ENCODE measurements at regions of chr12 and their contacts with region 1.

Region 1: GRCh38 chr12:53352331-53353256 is 16.4 kb upstream of the SP7 start:
- DNase-seq: peak; percentile 82 to 84 (median 84)
- H3K4me3 ChIP-seq: no peak overlapping the region
- H3K4me3 Mint-ChIP-seq: peak overlapping the region in 2 of 8 donors; percentile 1 to 7
- H3K27ac ChIP-seq: no peak overlapping the region
- H3K27ac Mint-ChIP-seq: peak overlapping the region in 4 of 7 donors; percentile 1 to 70 (median 26)
- H3K4me1 ChIP-seq: no peaks in the 10 kb centered on the region
- H3K4me1 Mint-ChIP-seq: peaks cover 4 to 7% (median 6%) of the 10 kb centered on the region in 4 donors
- H3K27me3 ChIP-seq: no peaks in the 10 kb centered on the region
- H3K27me3 Mint-ChIP-seq: no peaks in the 10 kb centered on the region

Region 2: GRCh38 chr12:52748578-52748977 is 604.0 kb before region 1 on chr12:
- CTCF ChIA-PET with region 1: no interaction called
- POLR2A ChIA-PET with region 1: no interaction called
- intact Hi-C with region 1: no loop called
- DNase-seq: no peak
- H3K4me3 ChIP-seq: no peak overlapping the region
- H3K4me3 Mint-ChIP-seq: no peak overlapping the region
- H3K27ac ChIP-seq: no peak overlapping the region
- H3K27ac Mint-ChIP-seq: no peak overlapping the region
- H3K4me1 ChIP-seq: no peaks in the 10 kb centered on the region
- H3K4me1 Mint-ChIP-seq: peaks cover 3 to 7% (median 5%) of the 10 kb centered on the region in 4 donors
- H3K27me3 ChIP-seq: no peaks in the 10 kb centered on the region
- H3K27me3 Mint-ChIP-seq: peaks cover 4 to 12% of the 10 kb centered on the region in 2 donors

Region 3: DNA sequence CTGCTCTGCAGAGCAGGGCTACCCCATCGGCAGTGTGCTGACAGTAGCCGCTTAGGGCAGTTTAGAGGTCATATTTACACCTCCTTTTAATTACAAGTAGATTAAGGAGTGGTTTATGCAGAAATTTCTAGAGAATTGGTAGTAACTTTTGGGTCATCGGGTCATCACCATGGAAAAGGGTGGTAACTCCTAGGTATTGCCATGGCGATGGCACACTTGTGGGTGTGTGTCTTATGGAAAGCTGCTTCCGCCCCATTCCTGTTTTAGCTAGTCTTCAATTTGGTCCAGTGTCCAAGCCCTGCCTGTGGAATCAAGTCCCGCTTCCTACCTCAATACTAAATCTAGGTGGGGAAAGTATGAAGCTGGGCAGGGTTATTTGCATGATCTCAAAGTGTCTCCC is 201.6 kb before region 1 on chr12:
- CTCF ChIA-PET with region 1: no interaction called
- POLR2A ChIA-PET with region 1: no interaction called
- intact Hi-C with region 1: no loop called
- DNase-seq: no peak
- H3K4me3 ChIP-seq: no peak overlapping the region
- H3K4me3 Mint-ChIP-seq: no peak overlapping the region
- H3K27ac ChIP-seq: no peak overlapping the region
- H3K27ac Mint-ChIP-seq: no peak overlapping the region
- H3K4me1 ChIP-seq: no peaks in the 10 kb centered on the region
- H3K4me1 Mint-ChIP-seq: no peaks in the 10 kb centered on the region
- H3K27me3 ChIP-seq: no peaks in the 10 kb centered on the region
- H3K27me3 Mint-ChIP-seq: no peaks in the 10 kb centered on the region

Region 4: DNA sequence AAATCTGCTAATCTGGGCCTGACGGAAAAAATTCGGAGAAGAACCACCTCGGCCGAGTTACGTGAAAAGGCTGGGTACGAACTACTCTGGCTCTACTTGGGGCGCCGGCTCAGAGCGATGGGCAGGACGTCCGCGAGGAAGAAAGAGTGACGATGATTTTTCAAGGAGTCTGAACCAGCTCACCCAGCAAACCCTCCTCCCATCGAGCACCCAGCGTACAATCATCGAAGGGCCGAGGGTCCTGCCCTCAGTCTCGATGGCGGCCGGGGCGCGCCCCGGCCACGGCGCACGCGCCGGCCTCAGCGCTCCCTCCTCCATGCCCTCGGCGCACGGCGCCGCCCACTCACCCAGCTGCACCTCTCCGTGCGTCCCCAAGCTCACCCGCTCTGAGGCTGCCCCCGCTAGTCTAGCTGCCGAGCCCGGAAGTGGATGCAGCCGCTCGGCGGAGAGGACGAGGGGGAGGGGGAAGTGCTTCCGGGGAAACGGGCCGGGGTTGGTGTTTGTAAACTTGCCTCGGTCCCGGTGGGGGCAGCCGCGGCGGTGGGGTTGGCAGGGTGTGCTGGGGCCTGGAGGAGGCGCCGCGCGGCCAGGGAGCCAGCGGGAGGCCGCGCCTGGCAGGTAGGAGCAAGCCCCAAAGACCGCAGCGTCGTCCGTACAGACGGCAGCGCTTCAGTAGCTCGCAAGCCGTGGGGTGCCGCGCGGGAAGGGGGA is 172.2 kb before region 1 on chr12 and contains the starts of genes CSAD and ZNF740:
- CTCF ChIA-PET with region 1: no interaction called
- POLR2A ChIA-PET with region 1: no interaction called
- intact Hi-C with region 1: no loop called
- DNase-seq: peak; percentile 96 to 99 (median 97)
- H3K4me3 ChIP-seq: peak within 1 kb of the TSS; percentile 56 to 74
- H3K4me3 Mint-ChIP-seq: peak within 1 kb of the TSS; percentile 90 to 96 (median 91)
- H3K27ac ChIP-seq: peak within 1 kb of the TSS; percentile 89
- H3K27ac Mint-ChIP-seq: peak within 1 kb of the TSS; percentile 88 to 98 (median 97)
- H3K4me1 ChIP-seq: peaks cover 50% of the 10 kb centered on the region
- H3K4me1 Mint-ChIP-seq: peaks cover 36 to 62% (median 49%) of the 10 kb centered on the region in 4 donors
- H3K27me3 ChIP-seq: no peaks in the 10 kb centered on the region
- H3K27me3 Mint-ChIP-seq: no peaks in the 10 kb centered on the region
- total RNA-seq, gene CSAD: 62.5 to 64.2 TPM
- total RNA-seq, gene ZNF740: 109 to 113 TPM

Region 5: GRCh38 chr12:53200458-53201176 is 152.0 kb before region 1 on chr12:
- CTCF ChIA-PET with region 1: no interaction called
- POLR2A ChIA-PET with region 1: no interaction called
- intact Hi-C with region 1: no loop called
- DNase-seq: no peak
- H3K4me3 ChIP-seq: peak overlapping the region; percentile 12 to 29
- H3K4me3 Mint-ChIP-seq: peak overlapping the region; percentile 66 to 89 (median 73)
- H3K27ac ChIP-seq: peak overlapping the region; percentile 41
- H3K27ac Mint-ChIP-seq: peak overlapping the region; percentile 73 to 95 (median 86)
- H3K4me1 ChIP-seq: peaks cover 95% of the 10 kb centered on the region
- H3K4me1 Mint-ChIP-seq: peaks cover 48 to 84% (median 66%) of the 10 kb centered on the region in 4 donors
- H3K27me3 ChIP-seq: no peaks in the 10 kb centered on the region
- H3K27me3 Mint-ChIP-seq: no peaks in the 10 kb centered on the region

Region 6: DNA sequence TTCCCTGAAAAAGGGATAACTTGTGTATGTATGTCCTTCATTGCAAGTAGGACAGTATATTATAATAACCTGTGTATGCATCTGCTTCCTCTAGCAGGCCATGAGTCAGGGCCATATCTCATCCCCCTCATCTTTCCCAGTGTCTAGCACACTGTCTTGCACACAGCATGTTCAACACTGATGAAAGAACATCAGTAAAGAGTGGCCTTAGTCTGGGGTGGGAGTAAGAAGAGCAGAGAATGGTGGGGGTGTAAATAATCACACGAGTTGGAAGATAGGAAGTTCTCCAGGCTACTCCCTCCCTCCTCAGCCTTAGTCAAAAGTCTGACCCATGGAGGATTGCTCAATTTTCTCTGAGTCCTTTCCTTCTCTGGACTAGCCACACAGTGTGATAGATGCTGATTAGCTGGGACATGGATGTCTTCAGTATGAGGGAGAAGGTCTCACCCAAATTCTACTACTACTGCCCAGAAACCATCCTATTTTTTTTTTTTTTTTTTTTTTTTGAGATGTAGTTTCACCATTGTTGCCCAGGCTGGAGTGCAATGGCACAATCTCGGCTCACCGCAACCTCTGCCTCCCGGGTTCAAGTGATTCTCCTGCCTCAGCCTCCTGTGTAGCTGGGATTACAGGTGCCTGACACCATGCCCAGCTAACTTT is 12.8 kb after region 1 on chr12:
- CTCF ChIA-PET with region 1: interaction called, 11 read pairs
- POLR2A ChIA-PET with region 1: no interaction called
- intact Hi-C with region 1: no loop called
- DNase-seq: no peak
- H3K4me3 ChIP-seq: no peak overlapping the region
- H3K4me3 Mint-ChIP-seq: peak overlapping the region in 1 of 8 donors; percentile 71
- H3K27ac ChIP-seq: no peak overlapping the region
- H3K27ac Mint-ChIP-seq: peak overlapping the region; percentile 50 to 91 (median 61)
- H3K4me1 ChIP-seq: peaks cover 9% of the 10 kb centered on the region
- H3K4me1 Mint-ChIP-seq: peaks cover 4 to 12% (median 8%) of the 10 kb centered on the region in 4 donors
- H3K27me3 ChIP-seq: no peaks in the 10 kb centered on the region
- H3K27me3 Mint-ChIP-seq: no peaks in the 10 kb centered on the region

Region 7: GRCh38 chr12:53388932-53389331 is 36.3 kb after region 1 on chr12:
- CTCF ChIA-PET with region 1: interaction called, 63 read pairs
- POLR2A ChIA-PET with region 1: interaction called, 3 read pairs
- intact Hi-C with region 1: no loop called
- DNase-seq: no peak
- H3K4me3 ChIP-seq: no peak overlapping the region
- H3K4me3 Mint-ChIP-seq: peak overlapping the region; percentile 14 to 86 (median 63)
- H3K27ac ChIP-seq: no peak overlapping the region
- H3K27ac Mint-ChIP-seq: peak overlapping the region in 3 of 7 donors; percentile 1 to 70 (median 35)
- H3K4me1 ChIP-seq: peaks cover 72% of the 10 kb centered on the region
- H3K4me1 Mint-ChIP-seq: peaks cover 36 to 70% (median 56%) of the 10 kb centered on the region in 4 donors
- H3K27me3 ChIP-seq: no peaks in the 10 kb centered on the region
- H3K27me3 Mint-ChIP-seq: no peaks in the 10 kb centered on the region

Region 8: DNA sequence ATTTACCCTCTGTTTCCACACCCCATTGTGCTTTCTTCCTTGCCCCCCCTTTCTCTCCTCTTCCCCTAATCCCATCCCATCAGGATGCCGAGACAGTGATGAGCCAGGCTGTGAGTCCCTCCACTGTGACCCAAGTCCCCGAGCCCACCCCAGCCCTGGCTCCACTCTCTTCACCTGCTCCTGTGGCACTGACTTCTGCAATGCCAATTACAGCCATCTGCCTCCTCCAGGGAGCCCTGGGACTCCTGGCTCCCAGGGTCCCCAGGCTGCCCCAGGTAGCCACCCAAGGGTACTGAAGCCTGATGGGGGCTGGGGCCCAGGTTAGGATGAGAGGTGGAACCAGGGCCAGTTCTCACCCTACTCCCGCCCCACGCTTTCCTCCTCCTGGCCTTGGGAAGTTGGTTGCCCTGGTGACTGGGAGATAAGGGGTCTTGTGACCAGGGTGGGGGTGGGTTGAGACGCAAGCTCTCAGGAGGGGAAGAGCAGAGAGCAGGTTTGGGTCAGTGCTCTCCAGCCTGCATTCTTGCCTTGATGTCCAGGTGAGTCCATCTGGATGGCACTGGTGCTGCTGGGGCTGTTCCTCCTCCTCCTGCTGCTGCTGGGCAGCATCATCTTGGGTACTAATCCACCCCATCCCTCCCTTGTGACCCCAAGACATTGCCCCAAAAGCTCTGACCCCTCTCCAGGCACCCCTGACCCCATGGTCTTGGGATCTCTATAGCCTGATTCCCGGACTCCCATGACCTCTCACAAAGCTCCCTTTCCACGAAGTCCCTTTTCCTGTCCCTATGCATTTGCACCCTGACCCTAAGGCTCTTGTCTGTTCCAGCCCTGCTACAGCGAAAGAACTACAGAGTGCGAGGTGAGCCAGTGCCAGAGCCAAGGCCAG is 72.3 kb after region 1 on chr12:
- CTCF ChIA-PET with region 1: interaction called, 203 read pairs
- POLR2A ChIA-PET with region 1: interaction called, 22 read pairs
- intact Hi-C with region 1: loop called (anchors 1 kb)
- DNase-seq: no peak
- H3K4me3 ChIP-seq: no peak overlapping the region
- H3K4me3 Mint-ChIP-seq: no peak overlapping the region
- H3K27ac ChIP-seq: no peak overlapping the region
- H3K27ac Mint-ChIP-seq: no peak overlapping the region
- H3K4me1 ChIP-seq: peaks cover 5% of the 10 kb centered on the region
- H3K4me1 Mint-ChIP-seq: peaks cover 5 to 9% (median 6%) of the 10 kb centered on the region in 4 donors
- H3K27me3 ChIP-seq: no peaks in the 10 kb centered on the region
- H3K27me3 Mint-ChIP-seq: no peaks in the 10 kb centered on the region

Measured in CD4-positive, alpha-beta memory T cell (primary cell).